Cardiac septum (tissue), 1 donor: ENCODE measurements at regions of chr2 and their contacts with region 1.

Region 1: DNA sequence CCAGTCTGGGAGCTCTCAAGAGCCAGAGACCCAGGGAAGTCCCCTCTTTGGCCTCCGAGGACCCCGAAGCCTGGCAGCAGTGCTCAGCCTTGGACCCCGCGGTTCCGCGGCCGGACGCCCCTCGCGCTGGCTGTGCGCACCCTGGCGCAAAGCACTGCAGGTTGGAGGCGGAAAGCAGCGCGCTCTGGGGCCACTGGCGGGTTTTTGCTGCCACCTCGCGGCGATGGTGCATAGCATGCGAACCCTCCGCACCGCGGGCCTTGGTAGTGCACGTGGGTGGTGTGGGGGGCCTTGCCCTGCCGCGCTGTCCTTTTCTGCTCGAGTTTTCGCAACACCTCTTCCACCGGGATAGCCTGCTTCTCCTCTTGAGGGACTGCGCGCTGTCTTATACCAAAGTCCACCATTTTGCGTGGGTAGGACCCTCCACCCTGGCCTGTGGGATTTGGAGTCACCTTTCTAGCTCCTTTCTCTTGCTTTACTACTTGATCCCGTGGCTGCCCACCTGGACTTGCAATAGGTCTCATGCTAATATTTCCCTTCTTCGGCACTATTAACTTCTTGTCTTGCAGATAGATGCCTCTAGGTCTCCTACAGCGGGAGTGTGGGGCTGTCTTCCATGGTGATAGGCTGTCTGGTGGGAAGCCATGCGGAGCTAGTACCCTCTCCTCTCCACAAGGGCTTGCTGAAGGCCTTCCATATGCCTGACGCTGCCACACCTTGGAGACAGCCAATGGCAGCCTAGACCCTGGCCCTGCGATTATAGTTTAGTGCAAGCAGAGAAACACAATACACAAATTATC is 14.3 kb downstream of the SIX3 start:
- DNase-seq: peak; percentile 85

Region 2: GRCh38 chr2:44044281-44044720 is 911.5 kb before region 1 on chr2:
- intact Hi-C with region 1: loop called (anchors 5 kb)
- DNase-seq: peak; percentile 87

Region 3: DNA sequence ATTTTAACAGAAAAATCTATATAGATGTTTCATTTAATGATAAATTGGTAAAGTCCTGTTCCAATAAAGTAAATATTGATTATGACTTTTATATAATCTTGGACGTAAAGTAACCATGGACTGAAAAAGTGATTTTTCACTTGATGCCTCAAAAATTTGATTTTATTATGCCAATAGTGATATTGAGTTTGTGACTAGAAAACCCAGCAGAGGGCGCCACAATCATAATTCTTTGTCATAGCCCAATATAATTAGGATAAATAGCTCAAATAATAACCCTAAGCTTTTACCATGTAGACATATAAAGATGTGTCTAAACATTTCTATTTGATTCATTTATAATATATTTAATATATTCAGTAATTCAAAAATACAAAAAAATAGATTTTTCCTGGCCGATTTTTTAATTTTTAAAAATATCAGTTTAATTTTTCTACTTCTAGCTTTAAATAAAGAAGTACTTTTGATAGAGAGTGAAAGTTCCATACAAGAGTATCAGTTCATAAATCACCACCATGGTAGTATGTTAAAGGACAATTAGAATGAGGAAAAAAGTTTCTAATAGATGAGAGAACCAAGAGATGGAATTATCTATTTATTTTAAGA is 563.4 kb before region 1 on chr2:
- intact Hi-C with region 1: loop called (anchors 5 kb)
- DNase-seq: no peak

Region 4: DNA sequence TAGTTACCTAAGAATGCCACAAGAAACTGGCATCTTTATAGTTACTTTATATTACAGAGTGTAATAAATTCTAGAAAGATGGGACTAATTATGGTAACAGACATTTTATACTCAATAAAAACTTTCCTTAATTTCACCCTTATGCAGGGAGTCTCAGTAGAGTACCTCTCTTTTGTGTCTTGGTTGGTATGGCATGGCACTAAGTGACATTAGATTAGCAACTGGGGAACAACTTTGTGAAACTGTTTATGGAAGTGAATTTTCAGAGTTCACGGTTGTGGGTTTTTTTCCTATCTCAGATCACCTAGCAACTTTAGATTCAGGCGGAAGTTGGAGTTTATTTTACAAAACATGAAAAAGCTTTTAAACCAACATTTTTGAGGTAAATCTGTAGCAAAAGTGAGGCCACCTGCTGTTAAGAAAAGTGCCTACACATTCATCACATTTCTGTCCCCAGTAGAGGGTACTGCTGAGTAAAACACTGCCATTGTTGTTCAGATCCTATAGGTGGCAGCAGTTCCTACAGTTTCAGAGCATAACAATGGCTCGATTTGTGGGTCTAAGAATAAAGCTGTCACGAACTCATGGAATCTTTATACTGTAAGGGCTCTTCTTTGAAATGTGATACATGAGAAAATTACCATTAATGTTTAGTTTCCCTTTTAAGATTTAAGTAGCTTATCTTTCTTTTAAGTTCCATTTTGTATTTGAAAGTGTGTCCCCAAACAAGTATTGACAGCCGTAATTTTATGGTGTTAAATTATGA is 476.5 kb before region 1 on chr2:
- intact Hi-C with region 1: loop called (anchors 2 kb)
- DNase-seq: no peak

Region 5: GRCh38 chr2:44560352-44560751 is 395.4 kb before region 1 on chr2:
- intact Hi-C with region 1: loop called (anchors 10 kb)
- DNase-seq: no peak

Region 6: DNA sequence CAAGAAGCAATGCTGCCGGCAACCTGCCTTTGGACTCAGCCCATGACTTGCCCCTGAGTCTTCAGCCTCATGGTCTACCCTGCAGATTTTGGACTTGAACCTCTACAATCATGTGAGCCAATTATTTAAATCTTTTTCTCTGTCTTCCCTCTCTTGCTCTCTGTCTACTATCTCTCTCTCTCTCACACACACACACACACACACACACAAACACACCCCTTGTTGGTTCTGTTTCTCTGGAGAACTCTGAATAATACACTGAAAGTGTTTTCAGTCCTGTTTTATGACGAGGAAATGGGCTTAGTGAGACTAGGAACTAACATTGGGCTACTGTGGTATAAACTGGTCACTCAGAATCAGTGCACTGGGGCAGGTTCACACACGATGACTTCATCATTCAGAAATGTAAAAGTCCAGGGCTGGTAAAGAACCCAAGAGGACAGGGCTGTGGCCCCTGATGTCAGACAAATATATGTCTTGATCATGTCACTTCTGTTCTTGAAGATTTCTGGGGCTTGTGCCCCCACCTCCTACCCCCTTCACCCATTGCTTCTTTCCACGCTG is 319.5 kb after region 1 on chr2:
- intact Hi-C with region 1: no loop called
- DNase-seq: no peak